Activated T-helper 1 cell treated with anti-CD3 and anti-CD28 coated beads, Interleukin-12 subunit alpha, Interleukin-12 subunit beta, Interleukin-2, Interleukin-4 antibody, amounts not matched to agents 30 ng/mL and 10 ng/mL and 1 ng/mL, durations not matched to agents 14 hours and 24 hours and 36 hours (primary cell): ENCODE measurements at regions of chr9 and their contacts with region 1.

Region 1: DNA sequence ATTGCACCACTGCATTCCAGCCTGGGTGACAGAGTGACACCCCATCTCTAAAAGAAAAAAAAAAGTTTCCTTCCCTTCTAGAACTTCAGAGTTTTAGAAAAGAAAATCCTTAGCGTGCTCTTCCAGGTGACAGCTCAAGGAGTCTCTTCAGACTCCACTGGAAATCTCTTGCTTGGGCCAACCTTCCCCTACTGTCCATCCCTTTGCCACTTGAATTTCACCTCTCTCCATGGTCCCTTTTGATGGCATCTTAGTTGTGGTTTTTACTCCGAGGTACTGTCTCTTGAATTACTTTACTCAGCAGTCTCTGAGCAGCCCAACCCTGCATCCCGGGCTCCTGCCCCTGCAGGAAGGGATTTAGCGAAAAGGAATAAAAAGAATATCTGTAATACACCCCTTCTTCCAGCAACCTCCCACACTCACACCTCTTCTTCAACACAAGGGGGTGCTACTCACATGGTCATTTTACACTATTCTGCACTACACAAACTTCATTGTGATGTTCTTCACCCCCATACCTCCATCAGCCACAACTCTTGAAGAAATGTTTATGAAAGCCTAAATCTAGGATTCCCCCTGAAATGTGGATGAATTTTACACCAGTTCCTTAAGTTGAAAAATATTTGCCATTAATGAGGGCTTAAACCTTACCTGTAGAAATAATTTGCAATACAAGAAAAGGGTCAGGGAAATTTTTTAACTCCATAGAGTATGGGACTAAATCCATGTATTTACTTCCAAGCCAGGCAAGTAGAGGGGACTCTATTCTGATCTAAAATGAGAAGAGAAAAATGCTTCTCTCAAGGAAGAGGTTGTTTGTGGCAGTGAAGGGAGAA is 25.9 kb downstream of the TPD52L3 start:
- DNase-seq: peak; percentile 24
- H3K4me3 Mint-ChIP-seq: no peak overlapping the region
- H3K27ac Mint-ChIP-seq: no peak overlapping the region
- H3K4me1 Mint-ChIP-seq: peaks cover 20% of the 10 kb centered on the region
- H3K27me3 Mint-ChIP-seq: peaks cover 20% of the 10 kb centered on the region

Region 2: DNA sequence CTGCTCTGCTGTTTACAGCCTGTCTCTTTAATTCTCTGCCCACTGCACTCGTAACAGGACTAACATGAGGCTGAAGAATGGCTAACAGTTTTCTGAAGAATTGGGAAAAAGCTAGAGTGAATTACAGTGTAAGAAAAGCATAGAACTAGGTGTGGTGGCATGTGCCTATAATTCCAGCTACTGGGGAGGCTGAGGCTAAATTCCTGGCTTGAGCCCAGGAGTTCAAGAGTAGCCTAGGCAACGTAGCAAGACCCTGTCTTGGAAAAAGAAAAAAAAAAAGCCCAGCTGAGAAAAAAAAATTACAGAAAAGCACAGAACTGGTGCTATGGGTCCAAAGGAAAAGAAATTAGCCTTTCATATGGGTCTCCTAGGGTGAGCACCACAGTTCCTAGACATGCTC is 45.0 kb after region 1 on chr9:
- intact Hi-C with region 1: no loop called
- DNase-seq: no peak
- H3K4me3 Mint-ChIP-seq: no peak overlapping the region
- H3K27ac Mint-ChIP-seq: no peak overlapping the region
- H3K4me1 Mint-ChIP-seq: no peaks in the 10 kb centered on the region
- H3K27me3 Mint-ChIP-seq: peaks cover 4% of the 10 kb centered on the region

Region 3: DNA sequence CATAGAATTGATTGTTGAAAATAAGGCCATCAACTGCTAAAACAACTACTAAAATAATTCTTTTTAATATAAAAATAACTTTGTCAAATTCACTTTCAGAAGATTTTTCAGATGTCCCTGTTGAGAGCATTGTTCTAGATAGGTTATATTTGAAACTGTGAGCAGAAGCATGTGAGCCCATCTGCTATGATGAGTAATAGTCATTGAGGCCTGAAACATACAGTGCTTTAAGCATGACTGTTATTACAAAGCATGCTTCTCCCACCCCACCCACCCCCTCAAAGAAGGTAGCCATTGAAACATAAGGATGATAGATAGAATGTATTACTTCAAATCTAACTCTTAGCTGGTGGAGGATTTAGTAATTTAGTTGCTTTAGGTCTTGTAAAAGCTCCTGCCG is 144.9 kb after region 1 on chr9:
- intact Hi-C with region 1: loop called (anchors 2 kb)
- DNase-seq: no peak
- H3K4me3 Mint-ChIP-seq: no peak overlapping the region
- H3K27ac Mint-ChIP-seq: peak overlapping the region; percentile 40
- H3K4me1 Mint-ChIP-seq: peaks cover 10% of the 10 kb centered on the region
- H3K27me3 Mint-ChIP-seq: peaks cover 1% of the 10 kb centered on the region

Region 4: DNA sequence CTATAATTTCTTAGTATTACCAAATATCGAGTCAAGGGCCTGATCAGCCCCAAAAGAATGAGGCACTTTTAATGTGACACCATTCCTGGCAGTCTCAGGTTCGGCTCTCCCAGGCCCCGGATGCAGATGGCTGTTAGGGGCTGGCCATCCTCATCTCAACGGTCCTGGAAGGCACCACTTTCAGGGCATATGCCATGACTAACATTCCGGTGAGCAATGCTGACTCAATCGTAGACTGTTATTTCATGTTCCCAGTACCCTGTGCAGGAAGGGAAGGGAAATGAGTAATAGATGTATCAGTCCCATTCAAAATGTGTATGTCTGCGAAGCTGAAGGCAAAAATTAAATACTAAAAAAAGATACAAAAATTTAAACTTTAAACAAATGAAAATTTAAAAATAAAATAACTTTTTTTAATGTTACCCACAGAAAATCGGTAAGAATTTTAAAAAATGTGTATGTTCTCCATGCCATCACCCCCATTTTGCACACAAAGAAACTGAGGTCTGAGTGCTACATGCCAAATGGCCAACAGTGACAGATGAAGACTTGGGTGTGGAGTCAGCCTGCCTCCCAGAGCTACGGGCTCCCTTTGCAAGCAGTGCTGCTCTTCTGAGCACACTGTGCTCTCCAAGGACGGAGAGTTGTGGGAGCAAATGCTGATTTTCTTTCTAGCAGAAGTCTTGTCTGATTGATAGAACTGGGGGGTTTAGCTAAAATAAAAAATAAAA is 212.5 kb after region 1 on chr9:
- intact Hi-C with region 1: loop called (anchors 1 kb)
- DNase-seq: peak; percentile 44
- H3K4me3 Mint-ChIP-seq: peak overlapping the region; percentile 57
- H3K27ac Mint-ChIP-seq: peak overlapping the region; percentile 80
- H3K4me1 Mint-ChIP-seq: peaks cover 26% of the 10 kb centered on the region
- H3K27me3 Mint-ChIP-seq: peaks cover 4% of the 10 kb centered on the region

Region 5: DNA sequence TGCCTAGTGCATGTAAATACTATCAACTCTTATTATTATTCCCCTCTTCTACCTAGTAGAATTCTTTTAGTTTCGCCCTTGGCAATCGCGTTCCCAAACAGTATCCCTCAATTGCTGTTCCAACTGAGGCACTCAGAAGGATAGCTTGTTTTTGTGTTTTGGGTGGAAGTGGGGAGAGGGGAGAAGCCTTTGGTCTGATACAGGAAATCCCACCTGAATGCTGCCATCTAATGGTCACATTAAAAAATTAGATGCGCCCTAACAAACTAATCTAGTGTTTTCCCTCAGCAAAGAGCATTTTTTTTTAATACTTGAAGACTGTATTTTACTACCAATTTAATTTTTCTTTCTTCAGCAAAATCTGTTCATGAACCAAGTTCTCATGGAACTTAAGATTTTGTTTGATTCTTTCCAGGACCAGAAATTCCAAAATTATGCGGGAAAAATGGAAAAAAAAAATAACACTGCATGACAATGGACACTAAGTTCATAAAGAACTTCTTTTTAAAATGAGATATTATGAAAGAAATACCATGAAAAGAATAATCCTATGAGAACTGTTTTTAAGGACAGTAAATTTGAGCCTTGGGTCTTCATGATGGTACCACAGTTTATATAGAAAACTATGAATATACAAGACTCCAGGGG is 313.7 kb after region 1 on chr9:
- intact Hi-C with region 1: loop called (anchors 5 kb)
- DNase-seq: no peak
- H3K4me3 Mint-ChIP-seq: no peak overlapping the region
- H3K27ac Mint-ChIP-seq: no peak overlapping the region
- H3K4me1 Mint-ChIP-seq: no peaks in the 10 kb centered on the region
- H3K27me3 Mint-ChIP-seq: peaks cover 5% of the 10 kb centered on the region